HCT116 (cell line): ENCODE measurements at regions of chr2 and their contacts with region 1.

Region 1: GRCh38 chr2:42944779-42945415 is 152.5 kb upstream of the HAAO start:
- DNase-seq: peak; percentile 15
- ATAC-seq: peak; percentile 82
- H3K4me3 ChIP-seq: no peak overlapping the region
- H3K27ac ChIP-seq: no peak overlapping the region
- H3K4me1 ChIP-seq: no peaks in the 10 kb centered on the region
- H3K27me3 ChIP-seq: no peaks in the 10 kb centered on the region
- CTCF ChIP-seq: no peak
- POLR2A ChIP-seq: no peak
- RAD21 ChIP-seq: no peak

Region 2: GRCh38 chr2:42828487-42829425 is 116.1 kb before region 1 on chr2:
- CTCF ChIA-PET with region 1: no interaction called
- POLR2A ChIA-PET with region 1: no interaction called
- RAD21 ChIA-PET with region 1: no interaction called
- intact Hi-C with region 1: loop called (anchors 5 kb)
- DNase-seq: peak; percentile 54
- ATAC-seq: peak; percentile 86
- H3K4me3 ChIP-seq: no peak overlapping the region
- H3K27ac ChIP-seq: no peak overlapping the region
- H3K4me1 ChIP-seq: peaks cover 0 to 12% of the 10 kb centered on the region in 2 experiments; a peak in 1 of 4 replicates
- H3K27me3 ChIP-seq: no peaks in the 10 kb centered on the region
- CTCF ChIP-seq: peak; percentile 75 to 92 (median 90)
- POLR2A ChIP-seq: no peak
- RAD21 ChIP-seq: peak; percentile 82

Region 3: GRCh38 chr2:42859006-42859552 is 85.8 kb before region 1 on chr2:
- CTCF ChIA-PET with region 1: no interaction called
- POLR2A ChIA-PET with region 1: no interaction called
- RAD21 ChIA-PET with region 1: no interaction called
- intact Hi-C with region 1: loop called (anchors 2 kb)
- DNase-seq: peak; percentile 69
- ATAC-seq: peak; percentile 75
- H3K4me3 ChIP-seq: no peak overlapping the region
- H3K27ac ChIP-seq: no peak overlapping the region
- H3K4me1 ChIP-seq: no peaks in the 10 kb centered on the region
- H3K27me3 ChIP-seq: no peaks in the 10 kb centered on the region
- CTCF ChIP-seq: peak; percentile 87 to 96 (median 91)
- POLR2A ChIP-seq: no peak
- RAD21 ChIP-seq: peak; percentile 93

Region 4: GRCh38 chr2:43131024-43131889 is 186.4 kb after region 1 on chr2:
- CTCF ChIA-PET with region 1: no interaction called
- POLR2A ChIA-PET with region 1: no interaction called
- RAD21 ChIA-PET with region 1: no interaction called
- intact Hi-C with region 1: loop called (anchors 5 kb)
- DNase-seq: peak; percentile 89
- ATAC-seq: peak; percentile 80
- H3K4me3 ChIP-seq: peak overlapping the region; percentile 25 to 41
- H3K27ac ChIP-seq: peak overlapping the region; percentile 65
- H3K4me1 ChIP-seq: peaks cover 20 to 23% of the 10 kb centered on the region in 2 experiments
- H3K27me3 ChIP-seq: no peaks in the 10 kb centered on the region
- CTCF ChIP-seq: peak in 2 of 3 experiments; percentile 62 to 71; a peak in 4 of 6 replicates
- POLR2A ChIP-seq: no peak
- RAD21 ChIP-seq: no peak

Region 5: DNA sequence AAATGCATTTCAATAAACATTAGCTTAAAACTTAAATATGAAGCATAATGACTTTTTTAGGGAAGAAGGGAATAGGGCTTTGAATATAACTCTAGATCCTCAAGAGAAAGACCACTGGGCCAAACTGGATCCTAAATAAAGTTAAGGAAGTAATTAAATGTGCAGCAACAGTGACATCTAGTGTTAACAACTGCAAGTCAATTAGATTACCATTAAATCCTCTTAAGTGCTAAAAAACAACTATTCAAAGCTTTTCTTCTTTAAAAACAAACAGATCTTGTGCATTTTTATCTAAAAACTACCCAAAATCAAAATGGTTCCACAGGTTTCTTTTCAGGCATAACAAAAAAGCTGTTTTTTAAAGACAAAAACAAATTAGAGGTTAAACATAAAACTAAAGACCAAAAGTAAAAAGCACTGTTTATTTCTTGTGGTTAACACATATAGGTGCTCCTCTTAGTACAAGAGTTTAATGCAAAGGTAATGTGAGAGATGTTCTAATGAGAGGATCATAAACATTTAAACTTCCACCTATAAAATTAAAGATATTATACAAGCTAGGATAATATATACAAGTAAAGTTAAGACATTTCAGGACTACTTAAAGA is 539.5 kb after region 1 on chr2:
- CTCF ChIA-PET with region 1: interaction called, 10 read pairs
- POLR2A ChIA-PET with region 1: no interaction called
- RAD21 ChIA-PET with region 1: no interaction called
- intact Hi-C with region 1: loop called (anchors 1 kb)
- DNase-seq: peak; percentile 73
- ATAC-seq: peak; percentile 60; the same call in 1 of the 2 replicates
- H3K4me3 ChIP-seq: no peak overlapping the region
- H3K27ac ChIP-seq: no peak overlapping the region
- H3K4me1 ChIP-seq: peaks cover 0 to 5% of the 10 kb centered on the region in 2 experiments; a peak in 1 of 4 replicates
- H3K27me3 ChIP-seq: no peaks in the 10 kb centered on the region
- CTCF ChIP-seq: peak; percentile 43 to 78 (median 73); a peak in 5 of 6 replicates
- POLR2A ChIP-seq: no peak
- RAD21 ChIP-seq: peak; percentile 87

Region 6: DNA sequence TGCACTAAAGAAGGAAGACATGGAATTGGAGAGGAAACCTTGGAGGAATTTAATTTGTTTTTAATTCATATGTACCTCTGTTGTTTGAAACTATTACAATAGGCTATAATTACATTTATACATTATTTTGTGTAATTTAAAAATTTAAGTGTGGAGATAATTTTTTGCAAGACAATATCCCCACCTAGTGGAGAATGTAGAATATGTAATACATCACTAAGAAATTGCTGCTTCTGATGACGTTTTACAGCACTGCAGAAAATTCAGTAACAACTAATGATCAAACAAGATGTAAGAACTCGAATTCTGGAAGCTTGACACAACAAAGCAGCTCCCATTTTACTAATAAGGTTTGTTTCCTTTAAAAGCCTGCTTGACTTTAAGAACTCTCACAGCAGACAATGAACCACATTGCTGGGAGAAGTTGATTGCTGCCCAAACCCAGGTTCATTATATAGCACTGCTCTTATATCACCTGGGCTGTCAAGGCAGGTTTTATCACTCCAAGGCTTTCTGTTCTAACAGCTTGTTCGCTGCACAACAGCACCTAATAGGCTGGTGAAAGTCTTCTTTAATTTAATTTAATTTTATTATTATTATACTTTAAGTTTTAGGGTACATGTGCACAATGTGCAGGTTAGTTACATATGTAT is 597.5 kb after region 1 on chr2:
- CTCF ChIA-PET with region 1: no interaction called
- POLR2A ChIA-PET with region 1: no interaction called
- RAD21 ChIA-PET with region 1: no interaction called
- intact Hi-C with region 1: loop called (anchors 2 kb)
- DNase-seq: peak; percentile 18
- ATAC-seq: peak; percentile 59
- H3K4me3 ChIP-seq: no peak overlapping the region
- H3K27ac ChIP-seq: no peak overlapping the region
- H3K4me1 ChIP-seq: no peaks in the 10 kb centered on the region
- H3K27me3 ChIP-seq: no peaks in the 10 kb centered on the region
- CTCF ChIP-seq: peak; percentile 24 to 60 (median 54); a peak in 3 of 6 replicates
- POLR2A ChIP-seq: no peak
- RAD21 ChIP-seq: peak; percentile 73

Region 7: DNA sequence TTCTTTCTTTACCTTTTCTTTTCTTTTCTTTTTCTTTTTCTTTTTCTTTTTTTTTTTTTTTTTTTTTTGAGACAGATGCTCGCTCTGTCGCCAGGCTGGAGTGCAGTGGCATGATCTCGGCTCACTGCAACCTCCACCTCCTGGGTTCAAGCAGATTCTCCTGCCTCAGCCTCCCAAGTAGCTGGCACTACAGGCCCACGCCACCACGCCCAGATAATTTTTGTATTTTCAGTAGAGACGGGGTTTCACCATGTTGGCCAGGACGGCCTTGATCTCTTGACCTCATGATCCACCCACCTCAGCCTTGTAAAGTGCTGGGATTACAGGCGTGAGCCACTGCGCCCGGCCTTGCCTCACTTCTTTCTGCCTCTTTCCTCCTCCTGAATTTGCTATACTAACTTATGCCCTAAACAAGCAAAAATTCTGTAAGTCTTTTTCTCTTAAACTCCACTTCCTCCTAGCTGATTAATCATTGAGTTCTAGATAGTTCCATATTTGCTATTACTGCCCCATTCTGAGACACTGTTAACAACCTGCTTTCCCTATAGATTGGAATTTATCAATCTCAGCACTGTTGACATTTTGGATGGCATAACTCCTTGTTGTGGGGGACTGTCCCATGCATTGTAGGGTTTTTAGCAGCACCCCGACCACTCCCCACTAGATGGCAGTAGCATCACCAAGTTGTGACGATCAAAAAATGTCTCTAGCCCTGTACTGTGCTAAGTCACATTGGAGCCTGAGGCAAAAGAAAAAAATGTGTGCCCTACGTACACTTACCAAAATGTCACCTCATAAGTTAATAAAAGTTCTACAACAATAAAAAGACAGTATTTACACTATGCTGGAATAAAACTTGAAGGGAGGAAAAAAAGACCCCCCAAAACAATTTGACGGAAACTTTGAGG is 667.3 kb after region 1 on chr2:
- CTCF ChIA-PET with region 1: no interaction called
- POLR2A ChIA-PET with region 1: no interaction called
- RAD21 ChIA-PET with region 1: interaction called in 1 of 2 experiments, 3 read pairs
- intact Hi-C with region 1: loop called (anchors 5 kb)
- DNase-seq: peak; percentile 74
- ATAC-seq: peak; percentile 94
- H3K4me3 ChIP-seq: no peak overlapping the region
- H3K27ac ChIP-seq: no peak overlapping the region
- H3K4me1 ChIP-seq: no peaks in the 10 kb centered on the region
- H3K27me3 ChIP-seq: no peaks in the 10 kb centered on the region
- CTCF ChIP-seq: peak; percentile 54 to 92 (median 92); a peak in 5 of 6 replicates
- POLR2A ChIP-seq: no peak
- RAD21 ChIP-seq: peak; percentile 81

Region 8: GRCh38 chr2:43848214-43848613 is 903.3 kb after region 1 on chr2:
- CTCF ChIA-PET with region 1: no interaction called
- POLR2A ChIA-PET with region 1: no interaction called
- RAD21 ChIA-PET with region 1: no interaction called
- intact Hi-C with region 1: no loop called
- DNase-seq: peak; percentile 33
- ATAC-seq: peak; percentile 77
- H3K4me3 ChIP-seq: no peak overlapping the region
- H3K27ac ChIP-seq: no peak overlapping the region
- H3K4me1 ChIP-seq: peaks cover 0 to 8% of the 10 kb centered on the region in 2 experiments; a peak in 2 of 4 replicates
- H3K27me3 ChIP-seq: no peaks in the 10 kb centered on the region
- CTCF ChIP-seq: no peak
- POLR2A ChIP-seq: no peak
- RAD21 ChIP-seq: no peak